Activated naive CD4-positive, alpha-beta T cell treated with anti-CD3 and anti-CD28 coated beads for 36 hours (primary cell): ENCODE measurements at regions of chr7 and their contacts with region 1.

Region 1: GRCh38 chr7:27921081-27921836 is 181.3 kb downstream of the TAX1BP1 start:
- DNase-seq: peak; percentile 48
- H3K4me3 Mint-ChIP-seq: no peak overlapping the region
- H3K27ac Mint-ChIP-seq: no peak overlapping the region
- H3K4me1 Mint-ChIP-seq: peaks cover 4% of the 10 kb centered on the region
- H3K27me3 Mint-ChIP-seq: no peaks in the 10 kb centered on the region

Region 2: GRCh38 chr7:27210441-27211083 is 710.7 kb before region 1 on chr7:
- CTCF ChIA-PET with region 1: interaction called, 3 read pairs
- intact Hi-C with region 1: loop called (anchors 2 kb)
- DNase-seq: peak; percentile 67
- H3K4me3 Mint-ChIP-seq: no peak overlapping the region
- H3K27ac Mint-ChIP-seq: no peak overlapping the region
- H3K4me1 Mint-ChIP-seq: peaks cover 20% of the 10 kb centered on the region
- H3K27me3 Mint-ChIP-seq: peaks cover 80% of the 10 kb centered on the region

Region 3: GRCh38 chr7:27689591-27690164 is 231.6 kb before region 1 on chr7:
- CTCF ChIA-PET with region 1: no interaction called
- intact Hi-C with region 1: loop called (anchors 1 kb)
- DNase-seq: peak; percentile 39
- H3K4me3 Mint-ChIP-seq: no peak overlapping the region
- H3K27ac Mint-ChIP-seq: no peak overlapping the region
- H3K4me1 Mint-ChIP-seq: no peaks in the 10 kb centered on the region
- H3K27me3 Mint-ChIP-seq: peaks cover 4% of the 10 kb centered on the region

Region 4: DNA sequence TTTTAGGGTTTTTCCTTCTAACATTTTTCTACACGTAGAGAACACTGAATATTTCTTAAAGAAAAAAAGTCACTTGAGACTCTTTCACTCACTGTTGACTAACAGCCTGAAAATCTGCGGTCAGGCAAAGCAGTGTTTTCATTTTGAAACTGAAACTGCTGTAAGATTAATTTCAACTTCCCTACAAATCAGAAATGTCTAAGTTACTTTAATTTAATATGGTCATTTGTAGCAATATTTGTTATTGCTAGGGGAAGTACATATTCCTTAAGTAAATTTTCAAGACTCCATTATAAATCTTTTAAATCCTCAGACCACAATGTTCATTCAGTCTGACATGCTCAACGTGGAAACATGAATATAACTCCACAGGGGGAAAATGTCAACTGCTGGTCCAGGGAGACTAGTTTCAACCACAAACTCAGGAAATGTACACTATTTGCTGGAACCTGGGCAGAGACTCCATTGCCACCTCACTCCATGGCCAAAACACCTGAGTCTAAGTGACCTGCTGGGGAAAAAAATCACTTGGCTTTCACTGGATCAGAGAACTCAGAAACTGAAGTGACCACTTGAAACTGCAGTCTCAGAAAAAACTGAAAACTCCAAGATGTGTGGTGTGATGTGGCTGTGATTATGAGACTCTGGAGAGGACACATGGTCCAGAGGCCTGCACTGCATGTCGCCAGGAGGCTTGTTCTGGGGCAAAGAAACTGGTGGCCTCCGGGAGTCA is 20.1 kb before region 1 on chr7:
- CTCF ChIA-PET with region 1: interaction called, 3 read pairs
- intact Hi-C with region 1: loop called (anchors 1 kb)
- DNase-seq: peak; percentile 51
- H3K4me3 Mint-ChIP-seq: no peak overlapping the region
- H3K27ac Mint-ChIP-seq: no peak overlapping the region
- H3K4me1 Mint-ChIP-seq: peaks cover 30% of the 10 kb centered on the region
- H3K27me3 Mint-ChIP-seq: no peaks in the 10 kb centered on the region

Region 5: DNA sequence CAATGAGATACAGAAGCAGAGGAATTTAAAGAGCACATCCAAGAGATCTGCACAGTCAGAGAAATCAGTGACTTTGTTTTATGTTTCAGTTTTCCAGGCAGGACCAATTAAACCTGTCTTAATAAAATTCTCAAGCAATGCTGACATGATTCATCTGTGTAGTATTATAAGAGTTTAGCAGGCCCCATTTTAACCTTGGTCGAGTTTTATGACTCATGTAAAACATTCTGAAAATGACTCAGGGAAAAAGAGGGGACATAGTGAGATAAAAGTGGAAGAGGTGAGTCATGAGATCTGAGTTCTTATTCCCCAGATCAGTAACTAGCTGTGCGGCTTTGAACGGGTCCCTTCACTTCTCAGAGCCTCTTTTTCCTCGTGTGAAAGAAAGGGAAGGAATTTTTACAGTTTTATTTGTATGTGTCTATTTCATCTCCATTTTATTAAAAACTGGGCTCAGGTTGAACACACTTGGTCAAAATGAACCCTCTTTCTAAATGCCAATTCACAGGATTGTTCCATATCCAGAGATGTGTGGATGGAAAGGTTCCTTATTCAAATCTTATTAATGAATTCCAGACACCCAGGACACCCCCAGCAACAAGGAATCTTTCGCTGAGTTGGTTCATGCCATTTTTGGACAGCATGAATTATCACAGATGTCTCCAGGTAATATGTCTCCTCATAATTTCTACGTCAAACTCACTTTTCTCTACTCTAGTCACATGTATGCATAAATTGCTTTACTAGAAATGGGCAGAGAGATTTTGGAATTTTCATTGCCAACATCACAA is 116.2 kb after region 1 on chr7:
- CTCF ChIA-PET with region 1: no interaction called
- intact Hi-C with region 1: no loop called
- DNase-seq: peak; percentile 50
- H3K4me3 Mint-ChIP-seq: no peak overlapping the region
- H3K27ac Mint-ChIP-seq: no peak overlapping the region
- H3K4me1 Mint-ChIP-seq: peaks cover 26% of the 10 kb centered on the region
- H3K27me3 Mint-ChIP-seq: peaks cover 16% of the 10 kb centered on the region

Region 6: DNA sequence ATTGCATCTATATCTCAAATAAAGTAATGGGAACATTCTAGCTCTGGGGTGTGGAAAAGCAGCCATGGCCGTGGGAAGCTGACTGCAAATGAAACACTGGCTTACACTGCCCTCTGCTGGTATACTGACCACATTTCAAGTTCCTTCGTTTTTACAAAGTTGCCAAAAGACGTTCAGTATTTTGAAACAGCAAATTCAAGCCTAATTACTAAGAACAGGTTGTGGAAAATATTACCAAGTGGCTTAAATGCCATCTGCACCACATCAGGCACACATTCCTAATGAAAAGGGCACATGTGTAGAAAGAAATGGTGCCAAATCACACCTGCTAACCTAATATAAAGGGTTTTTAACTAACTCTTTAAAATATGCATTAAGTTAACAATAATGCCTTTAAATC is 175.5 kb after region 1 on chr7:
- CTCF ChIA-PET with region 1: interaction called, 7 read pairs
- intact Hi-C with region 1: loop called (anchors 10 kb)
- DNase-seq: peak; percentile 57
- H3K4me3 Mint-ChIP-seq: no peak overlapping the region
- H3K27ac Mint-ChIP-seq: no peak overlapping the region
- H3K4me1 Mint-ChIP-seq: peaks cover 3% of the 10 kb centered on the region
- H3K27me3 Mint-ChIP-seq: no peaks in the 10 kb centered on the region